ENCODE measurements at regions of chr3 and their contacts with region 1.

Region 1: GRCh38 chr3:39378088-39378487 is 5.1 kb upstream of the SLC25A38 start:
- DNase-seq: peak in 4 of 6 donors; percentile 48 to 69 (median 54)
- ATAC-seq: peak; percentile 59 to 78 (median 74)
- H3K4me3 ChIP-seq: no peak overlapping the region
- H3K27ac ChIP-seq: no peak overlapping the region
- H3K4me1 ChIP-seq: peaks cover 20 to 32% (median 32%) of the 10 kb centered on the region in 3 donors
- H3K27me3 ChIP-seq: no peaks in the 10 kb centered on the region
- CTCF ChIP-seq: peak; percentile 34 to 61 (median 53)

Region 2: GRCh38 chr3:39208463-39209055 is 169.5 kb before region 1 on chr3:
- intact Hi-C with region 1: loop called in 1 of 3 experiments (anchors 10 kb)
- DNase-seq: peak in 3 of 6 donors; percentile 31 to 50 (median 49)
- ATAC-seq: peak; percentile 55 to 97 (median 92)
- H3K4me3 ChIP-seq: no peak overlapping the region
- H3K27ac ChIP-seq: no peak overlapping the region
- H3K4me1 ChIP-seq: no peaks in the 10 kb centered on the region
- H3K27me3 ChIP-seq: no peaks in the 10 kb centered on the region
- CTCF ChIP-seq: peak in 2 of 4 donors; percentile 31 to 40

Region 3: GRCh38 chr3:40465456-40465855 is 1087.4 kb after region 1 on chr3:
- intact Hi-C with region 1: no loop called
- DNase-seq: no peak
- ATAC-seq: no peak
- H3K4me3 ChIP-seq: no peak overlapping the region
- H3K27ac ChIP-seq: no peak overlapping the region
- H3K4me1 ChIP-seq: no peaks in the 10 kb centered on the region
- H3K27me3 ChIP-seq: no peaks in the 10 kb centered on the region
- CTCF ChIP-seq: no peak

Measured in pancreas (tissue), 10 donors.